ENCODE measurements at regions of chr1 and their contacts with region 1.

Region 1: GRCh38 chr1:157090196-157090647 is 9.4 kb downstream of the ETV3L start:
- DNase-seq: peak; percentile 90
- H3K4me3 Mint-ChIP-seq: no peak overlapping the region
- H3K27ac Mint-ChIP-seq: no peak overlapping the region
- H3K4me1 Mint-ChIP-seq: peaks cover 17% of the 10 kb centered on the region
- H3K27me3 Mint-ChIP-seq: no peaks in the 10 kb centered on the region
- CTCF ChIP-seq: peak; percentile 99

Region 2: DNA sequence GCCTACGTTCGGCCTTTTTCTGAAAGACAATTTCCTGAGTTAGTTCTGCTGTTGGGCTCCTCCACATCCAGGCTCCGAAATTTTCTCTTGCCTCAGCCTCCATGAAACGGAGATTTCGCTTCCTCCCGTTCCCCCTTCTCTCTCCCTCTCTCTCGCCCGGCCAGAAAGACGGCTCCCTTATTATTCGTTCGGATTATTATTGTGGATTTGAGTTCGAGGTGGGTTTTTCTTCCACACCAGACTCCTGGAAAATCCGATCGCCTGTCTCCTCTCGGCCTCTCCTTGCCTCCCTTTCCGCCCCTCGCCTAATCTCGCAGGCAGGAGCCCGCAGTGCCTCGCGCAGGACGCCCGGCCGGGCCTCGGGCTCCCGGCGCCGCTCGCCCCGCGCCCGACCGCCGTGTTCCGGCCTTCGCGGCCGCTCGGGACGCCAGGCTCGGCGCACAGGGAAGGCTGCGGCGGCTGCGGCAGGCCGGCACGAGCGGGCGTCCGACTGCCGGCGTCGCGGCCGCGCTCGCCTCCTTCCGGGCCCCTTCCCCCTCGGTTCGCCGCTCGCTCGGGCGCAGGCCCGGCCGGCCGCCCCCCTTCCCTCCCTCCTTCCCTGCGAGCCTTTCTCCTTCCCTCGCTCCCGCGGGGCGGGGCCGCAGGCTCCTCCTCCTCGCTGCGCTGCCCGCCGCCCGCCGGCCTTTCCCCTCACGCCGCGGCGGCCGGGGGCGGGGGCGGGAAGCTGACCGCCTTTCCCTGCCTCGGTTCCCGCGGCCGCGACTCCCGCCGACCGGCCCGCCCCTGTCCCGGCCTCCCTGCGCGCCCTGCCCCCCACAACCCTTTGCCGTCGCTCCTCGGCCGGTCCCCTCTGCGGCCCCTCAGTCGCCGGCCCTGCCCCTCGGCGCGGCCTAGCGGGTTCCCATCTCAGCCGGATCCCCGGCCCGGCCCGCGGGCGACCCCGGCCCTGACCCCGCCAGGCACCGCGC is 44.7 kb before region 1 on chr1 and contains the start of gene ARHGEF11:
- CTCF ChIA-PET with region 1: interaction called, 7 read pairs
- POLR2A ChIA-PET with region 1: interaction called, 11 read pairs
- intact Hi-C with region 1: no loop called
- DNase-seq: peak; percentile 95
- H3K4me3 Mint-ChIP-seq: peak within 1 kb of the TSS; percentile 95
- H3K27ac Mint-ChIP-seq: peak within 1 kb of the TSS; percentile 91
- H3K4me1 Mint-ChIP-seq: peaks cover 44% of the 10 kb centered on the region
- H3K27me3 Mint-ChIP-seq: peaks cover 13% of the 10 kb centered on the region
- CTCF ChIP-seq: no peak
- total RNA-seq, gene ARHGEF11: 34.5 and 38.5 TPM in 2 replicates

Region 3: GRCh38 chr1:157105988-157106812 is 16.0 kb after region 1 on chr1:
- CTCF ChIA-PET with region 1: interaction called, 125 read pairs
- POLR2A ChIA-PET with region 1: interaction called, 5 read pairs
- intact Hi-C with region 1: no loop called
- DNase-seq: peak; percentile 38
- H3K4me3 Mint-ChIP-seq: no peak overlapping the region
- H3K27ac Mint-ChIP-seq: no peak overlapping the region
- H3K4me1 Mint-ChIP-seq: peaks cover 9% of the 10 kb centered on the region
- H3K27me3 Mint-ChIP-seq: peaks cover 76% of the 10 kb centered on the region
- CTCF ChIP-seq: no peak

Region 4: DNA sequence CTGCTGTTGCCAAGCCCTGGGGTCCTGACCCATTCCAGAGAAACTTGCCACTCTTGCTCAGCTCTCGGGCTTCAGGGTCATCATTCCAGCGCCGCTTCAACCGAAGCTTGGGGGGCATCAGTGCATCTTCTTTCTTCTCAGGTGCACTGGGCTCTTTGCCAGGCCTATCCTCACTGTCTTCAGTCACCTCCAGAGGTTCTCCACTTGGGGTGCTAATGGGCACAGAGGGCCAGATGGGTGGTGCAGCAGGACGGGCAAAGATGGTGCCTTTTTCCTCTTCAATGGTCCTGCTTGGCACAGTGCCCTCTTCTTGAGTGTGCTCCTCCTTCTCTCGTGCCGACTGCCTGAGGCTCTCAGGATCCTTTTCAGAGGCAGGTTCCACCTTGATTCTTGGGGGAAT is 34.6 kb after region 1 on chr1:
- CTCF ChIA-PET with region 1: interaction called, 183 read pairs
- POLR2A ChIA-PET with region 1: no interaction called
- intact Hi-C with region 1: no loop called
- DNase-seq: peak; percentile 17
- H3K4me3 Mint-ChIP-seq: no peak overlapping the region
- H3K27ac Mint-ChIP-seq: no peak overlapping the region
- H3K4me1 Mint-ChIP-seq: no peaks in the 10 kb centered on the region
- H3K27me3 Mint-ChIP-seq: no peaks in the 10 kb centered on the region
- CTCF ChIP-seq: no peak

Region 5: DNA sequence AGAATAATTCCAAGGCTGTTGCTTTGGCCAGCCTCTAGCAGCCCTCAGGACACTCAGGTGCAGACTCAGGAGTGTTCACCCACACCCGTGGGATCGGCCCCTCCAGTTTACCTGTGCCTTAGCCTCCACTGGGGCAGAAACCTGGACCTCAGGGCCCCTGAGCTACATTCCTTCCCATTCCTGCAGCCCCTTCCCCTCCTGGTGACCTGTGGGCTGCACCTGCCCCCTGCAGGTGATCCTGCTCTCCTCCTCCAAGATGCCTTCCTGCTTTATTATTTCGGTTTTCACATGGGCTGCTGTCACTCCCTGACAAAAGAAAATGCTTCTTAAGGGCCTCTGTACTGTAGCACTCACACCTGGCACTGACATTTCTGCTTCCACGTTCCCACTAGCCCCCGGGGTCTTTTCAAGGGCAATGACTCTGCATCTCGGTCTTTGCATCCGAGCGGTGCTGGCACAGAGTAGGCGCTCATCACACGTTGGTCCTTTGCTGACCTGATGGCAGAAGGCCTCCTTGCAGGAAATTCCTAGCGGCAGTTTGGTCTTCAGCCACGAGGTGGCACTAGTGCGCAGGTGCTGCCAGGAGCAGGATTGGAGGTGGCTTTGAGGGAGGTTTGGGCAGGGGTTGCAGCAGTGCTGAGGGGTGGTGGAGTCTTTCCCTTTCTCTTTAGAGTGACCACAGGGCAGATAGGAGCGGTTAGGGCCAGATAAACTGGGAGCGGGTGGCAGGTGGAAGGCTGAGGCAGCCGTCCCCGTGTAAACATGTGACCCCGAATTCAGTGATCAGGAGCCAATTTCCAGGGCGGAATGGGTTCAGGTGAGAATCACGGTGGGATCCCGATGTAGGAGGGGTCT is 73.3 kb after region 1 on chr1:
- CTCF ChIA-PET with region 1: interaction called, 805 read pairs
- POLR2A ChIA-PET with region 1: no interaction called
- intact Hi-C with region 1: no loop called
- DNase-seq: peak; percentile 79
- H3K4me3 Mint-ChIP-seq: no peak overlapping the region
- H3K27ac Mint-ChIP-seq: no peak overlapping the region
- H3K4me1 Mint-ChIP-seq: peaks cover 7% of the 10 kb centered on the region
- H3K27me3 Mint-ChIP-seq: peaks cover 24% of the 10 kb centered on the region
- CTCF ChIP-seq: peak; percentile 97

Region 6: GRCh38 chr1:157176591-157177121 is 86.4 kb after region 1 on chr1:
- CTCF ChIA-PET with region 1: interaction called, 19 read pairs
- POLR2A ChIA-PET with region 1: no interaction called
- intact Hi-C with region 1: no loop called
- DNase-seq: no peak
- H3K4me3 Mint-ChIP-seq: no peak overlapping the region
- H3K27ac Mint-ChIP-seq: no peak overlapping the region
- H3K4me1 Mint-ChIP-seq: no peaks in the 10 kb centered on the region
- H3K27me3 Mint-ChIP-seq: peaks cover 89% of the 10 kb centered on the region
- CTCF ChIP-seq: no peak

Region 7: DNA sequence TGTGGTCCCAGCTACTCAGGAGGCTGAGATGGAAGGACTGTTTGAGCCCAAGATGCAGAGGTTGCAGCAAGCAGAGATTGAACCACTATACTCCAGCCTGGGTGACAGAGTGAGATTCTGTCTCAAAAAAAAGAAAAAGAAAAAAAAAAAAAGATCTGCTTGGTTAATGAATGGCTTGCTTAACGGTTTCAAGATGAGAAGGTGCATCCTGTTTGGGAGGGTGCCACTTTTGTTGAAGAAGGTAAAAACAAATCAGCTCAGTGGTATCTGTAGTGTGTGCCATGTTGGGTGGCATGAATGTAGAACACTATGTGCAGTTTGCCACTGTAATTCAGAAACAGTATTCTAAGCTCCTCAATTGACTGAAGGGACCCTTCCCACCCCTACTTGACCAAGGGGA is 142.9 kb after region 1 on chr1:
- CTCF ChIA-PET with region 1: no interaction called
- POLR2A ChIA-PET with region 1: no interaction called
- intact Hi-C with region 1: no loop called
- DNase-seq: no peak
- H3K4me3 Mint-ChIP-seq: no peak overlapping the region
- H3K27ac Mint-ChIP-seq: no peak overlapping the region
- H3K4me1 Mint-ChIP-seq: no peaks in the 10 kb centered on the region
- H3K27me3 Mint-ChIP-seq: peaks cover 59% of the 10 kb centered on the region
- CTCF ChIP-seq: no peak

Region 8: DNA sequence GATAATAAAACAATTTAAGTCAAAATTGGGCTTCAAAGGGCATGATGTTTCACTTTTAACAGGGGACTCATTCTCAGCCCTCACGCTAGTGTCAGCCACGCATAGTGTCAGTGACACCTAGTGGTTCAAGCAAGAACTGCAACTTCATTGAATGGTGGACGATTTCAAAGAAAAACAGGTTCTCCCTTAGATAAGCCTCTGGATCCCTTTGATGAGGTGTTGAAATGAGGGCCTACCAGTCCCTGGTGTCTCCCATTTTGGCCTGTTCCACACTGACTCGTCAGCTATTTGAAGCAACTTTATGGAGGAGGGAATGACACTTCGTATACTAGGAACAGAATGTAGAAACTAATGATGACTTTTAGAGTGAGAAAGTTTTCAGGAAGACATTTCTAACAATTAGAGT is 405.9 kb after region 1 on chr1:
- CTCF ChIA-PET with region 1: interaction called, 18 read pairs
- POLR2A ChIA-PET with region 1: no interaction called
- intact Hi-C with region 1: loop called (anchors 5 kb)
- DNase-seq: peak; percentile 74
- H3K4me3 Mint-ChIP-seq: no peak overlapping the region
- H3K27ac Mint-ChIP-seq: no peak overlapping the region
- H3K4me1 Mint-ChIP-seq: peaks cover 5% of the 10 kb centered on the region
- H3K27me3 Mint-ChIP-seq: peaks cover 90% of the 10 kb centered on the region
- CTCF ChIP-seq: peak; percentile 95